Naive thymus-derived CD4-positive, alpha-beta T cell (primary cell): ENCODE measurements at regions of chr4 and their contacts with region 1.

Region 1: DNA sequence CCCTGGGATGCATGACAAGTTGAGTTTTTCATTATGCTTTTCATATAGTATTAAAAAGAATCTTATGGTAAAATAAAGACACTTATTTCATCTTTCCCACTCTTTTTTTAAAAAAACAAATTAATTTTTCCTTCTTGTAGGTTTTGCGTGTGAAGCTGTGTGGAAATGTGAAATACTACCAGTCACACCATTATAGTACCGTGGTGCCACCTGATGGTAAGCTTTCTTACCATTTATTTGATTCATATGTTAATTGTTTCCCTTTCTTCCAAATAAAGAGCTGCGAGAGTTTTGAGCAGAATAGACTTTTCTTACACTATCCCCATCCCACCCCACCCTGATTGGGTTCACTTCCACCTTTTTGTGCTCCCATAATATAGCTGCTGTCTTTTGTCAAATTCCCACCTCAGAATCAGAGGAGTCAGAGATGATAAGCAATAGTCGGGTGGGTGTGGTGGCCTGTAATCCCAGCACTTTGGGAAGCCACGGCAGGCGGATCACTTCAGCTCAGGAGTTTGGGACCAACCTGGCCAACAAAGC is 44.3 kb downstream of the CASP6 start:
- DNase-seq: peak in 5 of 9 donors; percentile 26 to 47 (median 31)
- ATAC-seq: peak; percentile 54
- H3K4me3 ChIP-seq: no peak overlapping the region
- H3K4me3 Mint-ChIP-seq: peak overlapping the region in 5 of 10 donors; percentile 14 to 66 (median 44)
- H3K27ac ChIP-seq: peak overlapping the region; percentile 38
- H3K27ac Mint-ChIP-seq: peak overlapping the region in 7 of 9 donors; percentile 59 to 83 (median 76)
- H3K4me1 ChIP-seq: peaks cover 0 to 32% of the 10 kb centered on the region in 2 donors
- H3K4me1 Mint-ChIP-seq: peaks cover 15 to 78% (median 58%) of the 10 kb centered on the region in 7 donors
- H3K27me3 ChIP-seq: no peaks in the 10 kb centered on the region
- H3K27me3 Mint-ChIP-seq: no peaks in the 10 kb centered on the region

Region 2: DNA sequence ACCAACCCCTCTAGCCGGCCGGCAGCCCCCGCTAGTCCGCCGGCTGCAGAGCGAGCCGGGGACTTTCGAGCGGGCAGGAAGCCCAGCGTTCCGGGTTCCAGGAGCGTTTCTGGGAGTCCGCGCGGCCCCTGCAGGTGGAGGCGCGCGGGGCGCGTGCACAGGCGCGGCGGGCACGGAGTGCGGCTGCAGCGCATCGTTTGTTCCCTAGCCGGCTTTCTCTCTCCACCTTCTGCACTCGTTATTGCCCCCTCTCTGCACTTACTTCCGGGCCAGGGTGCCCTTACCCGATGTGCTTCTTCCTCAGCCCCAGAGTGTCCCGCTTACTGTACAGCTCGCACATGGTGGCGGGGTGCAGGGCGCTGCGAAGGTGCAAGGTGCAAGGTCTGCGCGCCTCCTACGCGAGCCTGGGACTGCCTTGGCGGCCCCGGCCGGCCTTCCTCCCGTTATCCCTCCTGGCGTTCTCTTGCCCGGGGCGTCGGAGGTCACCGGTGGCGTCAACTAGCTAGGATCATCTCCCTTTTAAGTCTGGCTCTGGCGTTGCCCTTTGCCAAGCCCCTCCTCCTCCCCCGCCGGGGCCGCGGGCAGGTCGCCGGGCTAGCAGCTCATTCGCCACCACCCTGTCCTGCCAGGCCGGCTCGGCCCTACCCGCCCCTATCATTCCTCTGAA is 896.2 kb before region 1 on chr4 and contains the start of gene ETNPPL:
- CTCF ChIA-PET with region 1: no interaction called
- POLR2A ChIA-PET with region 1: no interaction called
- intact Hi-C with region 1: no loop called
- DNase-seq: peak; percentile 9 to 42 (median 26)
- ATAC-seq: peak; percentile 61
- H3K4me3 ChIP-seq: peak within 1 kb of the TSS; percentile 54
- H3K4me3 Mint-ChIP-seq: peak within 1 kb of the TSS; percentile 83 to 96 (median 90)
- H3K27ac ChIP-seq: no peak within 1 kb of the TSS
- H3K27ac Mint-ChIP-seq: peak within 1 kb of the TSS in 1 of 9 donors; percentile 76
- H3K4me1 ChIP-seq: peaks cover 0 to 10% of the 10 kb centered on the region in 2 donors
- H3K4me1 Mint-ChIP-seq: peaks cover 10 to 17% (median 13%) of the 10 kb centered on the region in 7 donors
- H3K27me3 ChIP-seq: peaks cover 3 to 7% of the 10 kb centered on the region in 2 donors
- H3K27me3 Mint-ChIP-seq: peaks cover 24 to 62% (median 46%) of the 10 kb centered on the region in 5 donors
- total RNA-seq, gene ETNPPL: not detected

Region 3: GRCh38 chr4:109302361-109303139 is 356.4 kb before region 1 on chr4 and contains the start of gene COL25A1:
- CTCF ChIA-PET with region 1: no interaction called
- POLR2A ChIA-PET with region 1: no interaction called
- intact Hi-C with region 1: no loop called
- DNase-seq: peak; percentile 7 to 60 (median 41)
- ATAC-seq: peak; percentile 77
- H3K4me3 ChIP-seq: peak within 1 kb of the TSS; percentile 73
- H3K4me3 Mint-ChIP-seq: peak within 1 kb of the TSS; percentile 76 to 92 (median 84)
- H3K27ac ChIP-seq: no peak within 1 kb of the TSS
- H3K27ac Mint-ChIP-seq: peak within 1 kb of the TSS in 5 of 9 donors; percentile 21 to 65 (median 36)
- H3K4me1 ChIP-seq: peaks cover 8 to 9% of the 10 kb centered on the region in 2 donors
- H3K4me1 Mint-ChIP-seq: peaks cover 11 to 25% (median 19%) of the 10 kb centered on the region in 7 donors
- H3K27me3 ChIP-seq: peaks cover 10 to 16% of the 10 kb centered on the region in 2 donors
- H3K27me3 Mint-ChIP-seq: peaks cover 47 to 80% (median 64%) of the 10 kb centered on the region in 5 donors
- total RNA-seq, gene COL25A1: 0.22 to 0.59 (median 0.49) TPM in 4 of 5 experiments, not detected in the other

Region 4: DNA sequence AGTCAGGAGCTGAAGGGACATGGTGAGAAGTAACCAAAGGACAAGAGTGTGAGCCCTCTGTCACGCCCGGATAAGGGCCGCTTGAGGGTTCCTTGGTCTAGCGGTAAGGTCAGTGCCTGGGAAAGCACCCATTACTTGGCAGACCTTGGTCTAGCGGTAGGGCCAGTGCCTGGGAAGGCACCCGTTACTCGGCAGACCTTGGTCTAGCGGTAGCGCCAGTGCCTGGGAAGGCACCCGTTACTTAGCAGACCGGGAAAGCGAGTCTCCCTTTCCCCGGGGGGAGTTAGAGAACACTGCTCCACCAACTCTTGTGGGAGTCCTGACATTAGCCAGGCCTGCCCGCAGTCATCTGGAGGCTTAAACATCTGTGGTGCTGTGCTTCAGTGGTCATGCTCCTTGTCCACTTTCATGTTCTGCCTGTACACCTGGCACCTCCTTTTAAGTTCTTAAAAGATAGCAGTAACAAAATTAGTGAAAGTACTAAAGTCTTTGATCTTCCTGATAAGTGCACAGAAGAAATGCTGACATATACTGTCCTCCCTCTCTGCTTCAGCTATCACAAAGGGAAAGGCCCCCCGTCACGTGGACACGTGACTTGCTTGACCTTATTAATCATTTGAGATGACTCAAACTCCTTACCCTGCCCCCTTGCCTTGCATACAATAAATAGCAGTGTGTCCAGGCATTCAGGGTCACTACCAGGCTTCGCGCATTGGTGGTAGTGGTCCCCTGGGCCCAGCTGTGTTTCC is 234.7 kb before region 1 on chr4:
- CTCF ChIA-PET with region 1: interaction called, 8 read pairs
- POLR2A ChIA-PET with region 1: interaction called, 3 read pairs
- intact Hi-C with region 1: loop called in 1 of 2 experiments (anchors 1 kb)
- DNase-seq: no peak
- ATAC-seq: no peak
- H3K4me3 ChIP-seq: no peak overlapping the region
- H3K4me3 Mint-ChIP-seq: no peak overlapping the region
- H3K27ac ChIP-seq: no peak overlapping the region
- H3K27ac Mint-ChIP-seq: no peak overlapping the region
- H3K4me1 ChIP-seq: no peaks in the 10 kb centered on the region
- H3K4me1 Mint-ChIP-seq: peaks cover 4 to 7% (median 5%) of the 10 kb centered on the region in 7 donors
- H3K27me3 ChIP-seq: no peaks in the 10 kb centered on the region
- H3K27me3 Mint-ChIP-seq: peaks cover 0 to 10% (median 0%) of the 10 kb centered on the region in 5 donors

Region 5: GRCh38 chr4:109433205-109434006 is 225.5 kb before region 1 on chr4 and contains the start of gene SEC24B:
- CTCF ChIA-PET with region 1: interaction called, 15 read pairs
- POLR2A ChIA-PET with region 1: interaction called, 7 read pairs
- intact Hi-C with region 1: loop called in 1 of 2 experiments (anchors 1 kb)
- DNase-seq: peak; percentile 84 to 91 (median 90)
- ATAC-seq: peak; percentile 95
- H3K4me3 ChIP-seq: peak within 1 kb of the TSS; percentile 74
- H3K4me3 Mint-ChIP-seq: peak within 1 kb of the TSS; percentile 83 to 94 (median 88)
- H3K27ac ChIP-seq: peak within 1 kb of the TSS; percentile 93
- H3K27ac Mint-ChIP-seq: peak within 1 kb of the TSS; percentile 75 to 95 (median 93)
- H3K4me1 ChIP-seq: peaks cover 11 to 19% of the 10 kb centered on the region in 2 donors
- H3K4me1 Mint-ChIP-seq: peaks cover 29 to 61% (median 54%) of the 10 kb centered on the region in 7 donors
- H3K27me3 ChIP-seq: no peaks in the 10 kb centered on the region
- H3K27me3 Mint-ChIP-seq: no peaks in the 10 kb centered on the region
- total RNA-seq, gene SEC24B: 29.2 to 41.8 (median 35.2) TPM

Region 6: GRCh38 chr4:109574102-109574850 is 84.7 kb before region 1 on chr4:
- CTCF ChIA-PET with region 1: interaction called, 7 read pairs
- POLR2A ChIA-PET with region 1: interaction called, 4 read pairs
- intact Hi-C with region 1: loop called in 1 of 2 experiments (anchors 1 kb)
- DNase-seq: peak in 7 of 9 donors; percentile 24 to 61 (median 51)
- ATAC-seq: peak; percentile 82
- H3K4me3 ChIP-seq: peak overlapping the region; percentile 17
- H3K4me3 Mint-ChIP-seq: peak overlapping the region; percentile 42 to 83 (median 70)
- H3K27ac ChIP-seq: no peak overlapping the region
- H3K27ac Mint-ChIP-seq: peak overlapping the region in 8 of 9 donors; percentile 26 to 89 (median 75)
- H3K4me1 ChIP-seq: peaks cover 31 to 32% of the 10 kb centered on the region in 2 donors
- H3K4me1 Mint-ChIP-seq: peaks cover 47 to 91% (median 79%) of the 10 kb centered on the region in 7 donors
- H3K27me3 ChIP-seq: no peaks in the 10 kb centered on the region
- H3K27me3 Mint-ChIP-seq: no peaks in the 10 kb centered on the region

Region 7: DNA sequence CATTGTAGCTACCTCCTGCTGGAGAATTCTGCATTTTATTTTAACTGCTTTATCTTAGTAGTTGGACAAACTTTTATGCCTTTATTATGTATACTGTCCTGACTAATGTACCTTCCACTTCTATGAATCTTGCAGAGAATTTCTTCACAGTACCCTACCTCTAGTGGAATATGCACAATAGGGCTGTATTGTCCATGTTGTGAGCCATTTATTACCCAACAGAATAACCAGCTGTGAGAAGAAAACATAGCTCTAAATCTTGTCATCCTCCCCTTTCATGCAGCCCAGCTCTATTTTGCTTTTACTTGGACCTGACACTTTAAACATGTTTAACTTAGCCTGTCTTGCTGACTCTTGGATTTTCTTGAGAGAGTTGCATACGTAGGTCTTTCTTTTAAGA is 42.7 kb before region 1 on chr4:
- CTCF ChIA-PET with region 1: no interaction called
- POLR2A ChIA-PET with region 1: interaction called, 3 read pairs
- intact Hi-C with region 1: loop called in 1 of 2 experiments (anchors 5 kb)
- DNase-seq: no peak
- ATAC-seq: no peak
- H3K4me3 ChIP-seq: no peak overlapping the region
- H3K4me3 Mint-ChIP-seq: peak overlapping the region in 4 of 10 donors; percentile 17 to 57 (median 25)
- H3K27ac ChIP-seq: no peak overlapping the region
- H3K27ac Mint-ChIP-seq: peak overlapping the region in 5 of 9 donors; percentile 5 to 75 (median 59)
- H3K4me1 ChIP-seq: no peaks in the 10 kb centered on the region
- H3K4me1 Mint-ChIP-seq: peaks cover 25 to 98% (median 85%) of the 10 kb centered on the region in 7 donors
- H3K27me3 ChIP-seq: no peaks in the 10 kb centered on the region
- H3K27me3 Mint-ChIP-seq: no peaks in the 10 kb centered on the region

Region 8: GRCh38 chr4:109631532-109632108 is 27.3 kb before region 1 on chr4:
- CTCF ChIA-PET with region 1: interaction called, 12 read pairs
- POLR2A ChIA-PET with region 1: no interaction called
- intact Hi-C with region 1: no loop called
- DNase-seq: no peak
- ATAC-seq: peak; percentile 32
- H3K4me3 ChIP-seq: no peak overlapping the region
- H3K4me3 Mint-ChIP-seq: peak overlapping the region in 9 of 10 donors; percentile 18 to 82 (median 63)
- H3K27ac ChIP-seq: peak overlapping the region; percentile 20
- H3K27ac Mint-ChIP-seq: peak overlapping the region in 8 of 9 donors; percentile 68 to 91 (median 79)
- H3K4me1 ChIP-seq: peaks cover 0 to 25% of the 10 kb centered on the region in 2 donors
- H3K4me1 Mint-ChIP-seq: peaks cover 22 to 96% (median 83%) of the 10 kb centered on the region in 7 donors
- H3K27me3 ChIP-seq: no peaks in the 10 kb centered on the region
- H3K27me3 Mint-ChIP-seq: no peaks in the 10 kb centered on the region

Region 9: GRCh38 chr4:109648266-109648996 is 10.5 kb before region 1 on chr4:
- CTCF ChIA-PET with region 1: interaction called, 9 read pairs
- POLR2A ChIA-PET with region 1: interaction called, 7 read pairs
- intact Hi-C with region 1: loop called in 1 of 2 experiments (anchors 1 kb)
- DNase-seq: peak in 7 of 9 donors; percentile 69 to 91 (median 84)
- ATAC-seq: peak; percentile 96
- H3K4me3 ChIP-seq: peak overlapping the region; percentile 41
- H3K4me3 Mint-ChIP-seq: peak overlapping the region in 8 of 10 donors; percentile 59 to 88 (median 82)
- H3K27ac ChIP-seq: peak overlapping the region; percentile 81
- H3K27ac Mint-ChIP-seq: peak overlapping the region in 5 of 9 donors; percentile 92 to 100 (median 97)
- H3K4me1 ChIP-seq: peaks cover 68 to 70% of the 10 kb centered on the region in 2 donors
- H3K4me1 Mint-ChIP-seq: peaks cover 21 to 43% (median 34%) of the 10 kb centered on the region in 7 donors
- H3K27me3 ChIP-seq: no peaks in the 10 kb centered on the region
- H3K27me3 Mint-ChIP-seq: no peaks in the 10 kb centered on the region